ENCODE measurements at regions of chr19 and their contacts with region 1.

Region 1: DNA sequence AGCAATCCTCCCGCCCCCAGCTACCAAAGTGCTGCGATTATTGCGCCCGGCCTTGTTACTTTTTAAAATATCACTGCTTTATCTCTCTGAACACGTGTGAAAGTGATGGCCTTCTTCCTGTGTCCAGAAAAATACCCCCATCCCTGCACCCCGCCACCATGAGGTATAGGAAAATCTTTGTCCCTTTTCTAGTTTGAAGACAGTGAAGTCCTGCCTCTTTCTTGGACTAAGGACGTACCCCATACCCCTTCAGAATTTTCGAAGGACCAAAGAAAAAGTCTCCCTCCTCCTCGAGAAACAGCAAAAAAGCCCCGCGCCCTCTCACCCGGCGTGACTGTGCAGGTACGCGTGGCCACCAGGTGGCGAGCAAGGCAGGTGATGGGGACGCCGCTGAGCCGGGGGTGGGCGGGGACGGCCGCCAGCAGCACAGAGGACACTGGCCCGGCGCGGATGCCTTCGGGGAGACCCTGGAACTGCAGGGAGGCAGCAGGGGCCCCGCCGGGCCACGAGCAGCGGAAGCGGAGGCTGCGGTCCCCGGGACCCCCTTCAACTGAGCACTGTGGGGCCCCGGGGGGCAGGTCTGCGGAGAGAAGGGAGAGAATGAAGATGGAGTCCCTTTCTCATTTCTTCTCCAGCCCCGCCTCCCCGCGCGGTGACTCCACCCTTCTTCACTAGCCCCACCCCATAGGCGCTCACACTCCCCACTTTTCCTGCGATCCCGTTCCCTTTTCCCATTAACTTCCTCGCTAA is 3.2 kb downstream of the VSIG10L start:
- H3K4me3 Mint-ChIP-seq: peak overlapping the region; percentile 89
- H3K27ac Mint-ChIP-seq: peak overlapping the region; percentile 88
- H3K4me1 Mint-ChIP-seq: peaks cover 38% of the 10 kb centered on the region
- H3K27me3 Mint-ChIP-seq: peaks cover 29% of the 10 kb centered on the region

Region 2: GRCh38 chr19:51282335-51282734 is 56.4 kb before region 1 on chr19:
- intact Hi-C with region 1: no loop called
- H3K4me3 Mint-ChIP-seq: no peak overlapping the region
- H3K27ac Mint-ChIP-seq: no peak overlapping the region
- H3K4me1 Mint-ChIP-seq: no peaks in the 10 kb centered on the region
- H3K27me3 Mint-ChIP-seq: peaks cover 53% of the 10 kb centered on the region

Region 3: GRCh38 chr19:51367565-51368365 is 29.0 kb after region 1 on chr19:
- intact Hi-C with region 1: loop called (anchors 1 kb)
- H3K4me3 Mint-ChIP-seq: peak overlapping the region; percentile 77
- H3K27ac Mint-ChIP-seq: peak overlapping the region; percentile 85
- H3K4me1 Mint-ChIP-seq: peaks cover 68% of the 10 kb centered on the region
- H3K27me3 Mint-ChIP-seq: no peaks in the 10 kb centered on the region

Region 4: GRCh38 chr19:51441410-51442390 is 103.0 kb after region 1 on chr19:
- intact Hi-C with region 1: loop called (anchors 5 kb)
- H3K4me3 Mint-ChIP-seq: peak overlapping the region; percentile 69
- H3K27ac Mint-ChIP-seq: peak overlapping the region; percentile 79
- H3K4me1 Mint-ChIP-seq: peaks cover 44% of the 10 kb centered on the region
- H3K27me3 Mint-ChIP-seq: peaks cover 36% of the 10 kb centered on the region